OCI-LY7 (cell line): ENCODE measurements at regions of chr3 and their contacts with region 1.

Region 1: GRCh38 chr3:107235928-107236315 is 141.3 kb upstream of the CCDC54 start:
- DNase-seq: peak; percentile 82
- H3K4me3 ChIP-seq: peak overlapping the region; percentile 37
- H3K27ac ChIP-seq: no peak overlapping the region
- H3K4me1 ChIP-seq: peaks cover 22% of the 10 kb centered on the region
- CTCF ChIP-seq: peak; percentile 98

Region 2: GRCh38 chr3:107032111-107032510 is 203.8 kb before region 1 on chr3:
- CTCF ChIA-PET with region 1: no interaction called
- POLR2A ChIA-PET with region 1: no interaction called
- intact Hi-C with region 1: no loop called
- DNase-seq: no peak
- H3K4me3 ChIP-seq: no peak overlapping the region
- H3K27ac ChIP-seq: no peak overlapping the region
- H3K4me1 ChIP-seq: no peaks in the 10 kb centered on the region
- CTCF ChIP-seq: no peak

Region 3: DNA sequence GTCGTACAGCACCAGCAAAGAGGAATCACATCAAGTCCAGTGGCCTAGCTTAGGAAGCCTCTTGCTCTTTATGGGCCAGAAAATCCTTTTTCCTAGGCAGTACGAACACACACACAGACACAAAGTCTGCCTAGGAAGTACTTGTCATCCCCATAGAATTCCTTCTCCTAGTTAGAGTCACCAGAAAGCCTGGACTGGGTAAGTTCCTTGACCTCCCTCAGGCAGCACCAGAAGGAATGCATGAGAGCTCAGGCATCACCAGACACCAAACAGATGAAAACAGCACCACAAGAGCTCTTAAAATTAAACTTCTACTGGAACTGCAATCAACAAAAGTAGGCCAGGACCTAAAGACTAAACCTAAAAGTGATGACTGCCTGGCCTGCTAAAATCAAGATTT is 51.5 kb before region 1 on chr3:
- CTCF ChIA-PET with region 1: no interaction called
- POLR2A ChIA-PET with region 1: no interaction called
- intact Hi-C with region 1: no loop called
- DNase-seq: no peak
- H3K4me3 ChIP-seq: no peak overlapping the region
- H3K27ac ChIP-seq: no peak overlapping the region
- H3K4me1 ChIP-seq: no peaks in the 10 kb centered on the region
- CTCF ChIP-seq: no peak

Region 4: GRCh38 chr3:107421170-107421792 is 185.4 kb after region 1 on chr3:
- CTCF ChIA-PET with region 1: interaction called, 8 read pairs
- POLR2A ChIA-PET with region 1: interaction called, 5 read pairs
- intact Hi-C with region 1: loop called (anchors 1 kb)
- DNase-seq: peak; percentile 75
- H3K4me3 ChIP-seq: no peak overlapping the region
- H3K27ac ChIP-seq: no peak overlapping the region
- H3K4me1 ChIP-seq: peaks cover 18% of the 10 kb centered on the region
- CTCF ChIP-seq: peak; percentile 85

Region 5: DNA sequence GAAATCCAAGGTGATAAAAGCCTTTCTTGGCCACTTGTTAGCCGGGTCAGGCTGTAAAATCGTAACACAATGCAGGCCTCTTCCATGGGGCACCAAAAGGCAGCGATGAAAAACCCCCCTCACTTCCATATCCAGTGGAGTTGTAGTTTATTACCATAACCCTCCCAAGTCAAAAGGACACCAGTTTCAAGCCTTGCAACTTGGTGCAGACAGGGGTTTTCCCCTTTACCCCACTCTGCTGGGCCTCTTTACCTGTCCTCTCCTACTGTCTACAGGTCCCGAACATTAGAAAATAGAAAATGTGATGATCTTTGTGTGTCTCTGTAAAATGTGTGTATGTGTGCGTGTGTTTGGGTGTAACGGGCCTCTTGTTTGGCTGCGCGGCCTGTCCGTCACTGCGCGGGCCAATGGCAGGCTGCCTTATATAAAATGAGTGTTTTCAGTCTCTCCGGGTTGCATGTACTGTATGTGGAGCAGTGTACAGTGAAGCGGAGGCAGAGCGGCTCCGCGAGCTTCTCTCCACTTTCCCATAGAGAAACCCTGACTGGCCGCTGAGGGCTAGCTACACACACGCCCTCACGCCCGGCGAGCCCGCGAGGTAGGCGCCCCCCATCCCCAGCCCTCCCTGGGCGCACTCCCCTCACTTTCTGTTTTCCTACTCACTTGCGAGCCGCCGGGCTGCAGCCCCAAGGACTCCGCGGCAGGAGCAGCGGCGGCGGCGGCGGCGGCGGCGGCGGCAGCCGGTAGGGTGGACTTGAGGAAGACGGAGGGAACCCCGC is 286.8 kb after region 1 on chr3 and contains the start of gene BBX:
- CTCF ChIA-PET with region 1: no interaction called
- POLR2A ChIA-PET with region 1: no interaction called
- intact Hi-C with region 1: loop called (anchors 5 kb)
- DNase-seq: peak; percentile 92
- H3K4me3 ChIP-seq: peak within 1 kb of the TSS; percentile 89
- H3K27ac ChIP-seq: peak within 1 kb of the TSS; percentile 82
- H3K4me1 ChIP-seq: peaks cover 40% of the 10 kb centered on the region
- CTCF ChIP-seq: no peak
- total RNA-seq, gene BBX: 20.2 and 27.0 TPM in 2 replicates

Region 6: GRCh38 chr3:107740992-107741896 is 505.3 kb after region 1 on chr3:
- CTCF ChIA-PET with region 1: no interaction called
- POLR2A ChIA-PET with region 1: interaction called, 6 read pairs
- intact Hi-C with region 1: loop called (anchors 5 kb)
- DNase-seq: peak; percentile 35
- H3K4me3 ChIP-seq: no peak overlapping the region
- H3K27ac ChIP-seq: no peak overlapping the region
- H3K4me1 ChIP-seq: no peaks in the 10 kb centered on the region
- CTCF ChIP-seq: peak; percentile 79

Region 7: DNA sequence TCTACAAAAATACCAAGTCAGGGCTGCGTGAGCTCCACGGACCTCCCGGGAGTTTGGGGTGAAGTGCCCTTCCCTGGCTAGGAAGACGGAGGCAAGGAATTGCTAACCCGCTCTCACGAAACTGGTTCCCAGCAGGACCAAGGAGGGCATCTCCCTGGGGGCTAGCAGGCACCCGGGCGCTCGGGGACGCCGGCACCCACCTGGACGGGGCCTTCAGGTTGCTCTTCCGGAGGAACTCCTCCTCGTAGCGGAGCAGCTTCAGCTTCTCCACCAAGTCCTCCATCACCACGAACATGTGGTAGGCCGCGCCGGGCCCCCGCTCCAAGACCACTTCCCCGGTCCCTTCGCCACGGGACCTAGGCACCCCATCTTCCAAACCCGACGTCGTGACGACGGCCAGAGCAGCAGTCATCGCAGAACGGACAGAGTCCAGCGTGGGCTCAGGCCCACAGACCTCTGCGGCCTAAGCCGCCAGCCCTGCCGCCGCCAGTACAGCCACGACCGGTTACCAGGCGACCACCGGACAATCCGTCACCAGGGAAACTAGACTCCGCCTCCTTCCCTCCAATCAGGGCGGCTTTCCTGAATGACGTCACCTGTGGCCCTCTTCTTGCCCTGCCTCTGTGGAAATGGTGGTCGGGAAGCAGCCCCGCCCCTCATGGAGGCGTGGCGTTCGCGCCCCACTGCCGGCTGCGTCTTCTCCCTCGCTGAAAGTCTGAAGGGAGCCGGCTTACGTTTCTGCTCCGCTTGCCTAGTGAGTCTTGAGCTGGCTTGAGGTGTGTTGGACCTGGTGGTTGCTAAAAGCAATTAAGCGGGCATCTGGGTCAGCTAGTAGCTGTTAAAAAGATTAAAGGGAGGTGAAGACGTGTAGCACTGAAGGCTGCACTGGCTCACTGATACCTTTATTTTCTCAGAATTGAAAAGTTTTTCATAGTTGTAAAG is 986.3 kb after region 1 on chr3 and contains the start of gene IFT57:
- CTCF ChIA-PET with region 1: no interaction called
- POLR2A ChIA-PET with region 1: no interaction called
- intact Hi-C with region 1: loop called (anchors 5 kb)
- DNase-seq: peak; percentile 98
- H3K4me3 ChIP-seq: peak within 1 kb of the TSS; percentile 92
- H3K27ac ChIP-seq: peak within 1 kb of the TSS; percentile 75
- H3K4me1 ChIP-seq: peaks cover 42% of the 10 kb centered on the region
- CTCF ChIP-seq: no peak
- total RNA-seq, gene IFT57: 61.9 and 68.2 TPM in 2 replicates